Transverse colon (tissue), 4 donors: ENCODE measurements at regions of chr12 and their contacts with region 1.

Region 1: DNA sequence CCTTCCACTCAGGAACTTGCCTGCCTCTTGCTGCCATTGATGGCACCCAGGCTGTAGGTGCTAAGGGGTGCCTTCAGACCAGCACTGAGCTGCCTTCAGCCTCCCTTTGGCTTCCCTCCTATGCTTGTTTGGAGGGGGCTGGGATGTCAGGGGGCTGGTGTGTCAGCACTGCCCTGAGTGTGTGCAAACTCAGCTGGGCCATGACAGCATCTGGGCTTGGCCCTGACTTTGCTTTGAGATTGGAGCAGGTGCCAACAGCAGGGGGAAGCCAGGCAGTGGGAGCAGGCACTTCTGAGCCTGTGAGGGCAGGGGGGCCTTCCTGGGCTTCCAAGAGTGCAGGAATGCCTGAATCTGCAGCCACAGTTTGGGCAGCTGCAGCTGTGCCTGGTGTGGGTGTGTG is 56.9 kb downstream of the ATP23 start:
- DNase-seq: no peak
- H3K4me3 ChIP-seq: no peak overlapping the region
- H3K27ac ChIP-seq: no peak overlapping the region
- H3K4me1 ChIP-seq: no peaks in the 10 kb centered on the region
- H3K27me3 ChIP-seq: no peaks in the 10 kb centered on the region
- CTCF ChIP-seq: no peak
- EP300 ChIP-seq: no peak
- POLR2A ChIP-seq: no peak

Region 2: GRCh38 chr12:58452546-58452945 is 454.3 kb after region 1 on chr12:
- in situ Hi-C with region 1: no loop called
- intact Hi-C with region 1: loop called (anchors 5 kb)
- DNase-seq: no peak
- H3K4me3 ChIP-seq: no peak overlapping the region
- H3K27ac ChIP-seq: no peak overlapping the region
- H3K4me1 ChIP-seq: no peaks in the 10 kb centered on the region
- H3K27me3 ChIP-seq: no peaks in the 10 kb centered on the region
- CTCF ChIP-seq: no peak
- EP300 ChIP-seq: no peak
- POLR2A ChIP-seq: no peak

Region 3: DNA sequence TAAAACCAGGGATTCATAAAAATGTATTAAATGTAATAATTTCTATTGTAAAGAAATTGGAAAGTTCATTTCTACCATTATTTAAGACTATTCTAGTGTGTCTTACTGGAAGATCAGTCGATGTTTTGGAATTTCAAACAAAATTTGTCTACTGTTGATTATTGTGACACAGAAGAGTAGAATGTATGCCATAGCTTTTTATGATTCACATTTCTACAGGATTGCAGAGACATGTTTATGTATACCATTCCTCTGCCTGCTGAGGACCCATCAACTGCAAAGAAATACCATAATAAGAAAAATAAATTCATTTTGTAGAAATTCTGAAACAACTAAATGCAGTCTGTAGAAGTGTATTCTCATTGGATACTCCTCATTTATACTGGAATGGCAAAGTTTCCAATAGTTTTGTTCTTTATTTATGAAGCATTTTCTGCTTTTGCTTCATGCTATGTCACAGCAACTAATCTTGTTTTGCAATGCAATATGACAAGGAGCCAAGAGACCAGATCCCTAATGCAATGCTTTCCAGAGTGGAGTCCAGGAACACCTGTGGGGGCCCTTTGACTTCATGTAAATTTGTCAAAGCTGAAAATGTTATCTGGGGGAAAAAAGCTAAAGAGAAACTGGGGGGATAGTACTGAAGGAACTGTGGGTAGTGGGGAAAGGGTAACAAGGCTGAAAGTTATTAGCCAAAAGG is 1095.0 kb after region 1 on chr12:
- in situ Hi-C with region 1: no loop called
- intact Hi-C with region 1: no loop called
- DNase-seq: no peak
- H3K4me3 ChIP-seq: no peak overlapping the region
- H3K27ac ChIP-seq: no peak overlapping the region
- H3K4me1 ChIP-seq: no peaks in the 10 kb centered on the region
- H3K27me3 ChIP-seq: no peaks in the 10 kb centered on the region
- CTCF ChIP-seq: no peak
- EP300 ChIP-seq: no peak
- POLR2A ChIP-seq: no peak